ENCODE measurements at regions of chr11 and their contacts with region 1.

Region 1: GRCh38 chr11:78564490-78565467 is 9.9 kb downstream of the NARS2 start:
- DNase-seq: peak; percentile 42
- H3K4me3 ChIP-seq: no peak overlapping the region
- H3K27ac ChIP-seq: no peak overlapping the region
- H3K4me1 ChIP-seq: peaks cover 31% of the 10 kb centered on the region
- H3K27me3 ChIP-seq: no peaks in the 10 kb centered on the region
- CTCF ChIP-seq: peak; percentile 60 to 61

Region 2: GRCh38 chr11:78149646-78150045 is 415.1 kb before region 1 on chr11:
- CTCF ChIA-PET with region 1: no interaction called
- dilution Hi-C with region 1: no loop called
- in situ Hi-C with region 1: no loop called
- intact Hi-C with region 1: loop called (anchors 5 kb)
- DNase-seq: peak; percentile 48
- H3K4me3 ChIP-seq: no peak overlapping the region
- H3K27ac ChIP-seq: no peak overlapping the region
- H3K4me1 ChIP-seq: no peaks in the 10 kb centered on the region
- H3K27me3 ChIP-seq: no peaks in the 10 kb centered on the region
- CTCF ChIP-seq: peak in 1 of 2 donors; percentile 20

Region 3: GRCh38 chr11:78168539-78169477 is 396.0 kb before region 1 on chr11:
- CTCF ChIA-PET with region 1: no interaction called
- dilution Hi-C with region 1: no loop called
- in situ Hi-C with region 1: no loop called
- intact Hi-C with region 1: no loop called
- DNase-seq: no peak
- H3K4me3 ChIP-seq: no peak overlapping the region
- H3K27ac ChIP-seq: no peak overlapping the region
- H3K4me1 ChIP-seq: no peaks in the 10 kb centered on the region
- H3K27me3 ChIP-seq: no peaks in the 10 kb centered on the region
- CTCF ChIP-seq: no peak

Measured in mammary epithelial cell (primary cell).